CD4-positive, alpha-beta memory T cell (primary cell): ENCODE measurements at regions of chr11 and their contacts with region 1.

Region 1: GRCh38 chr11:46352063-46352841 is 5.0 kb downstream of the DGKZ start:
- DNase-seq: peak; percentile 76 to 90 (median 80)
- H3K4me3 ChIP-seq: peak overlapping the region; percentile 60 to 61
- H3K4me3 Mint-ChIP-seq: peak overlapping the region; percentile 73 to 91 (median 83)
- H3K27ac ChIP-seq: peak overlapping the region; percentile 69
- H3K27ac Mint-ChIP-seq: peak overlapping the region; percentile 84 to 97 (median 90)
- H3K4me1 ChIP-seq: peaks cover 87% of the 10 kb centered on the region
- H3K4me1 Mint-ChIP-seq: peaks cover 44 to 91% (median 70%) of the 10 kb centered on the region in 4 donors
- H3K27me3 ChIP-seq: no peaks in the 10 kb centered on the region
- H3K27me3 Mint-ChIP-seq: no peaks in the 10 kb centered on the region

Region 2: DNA sequence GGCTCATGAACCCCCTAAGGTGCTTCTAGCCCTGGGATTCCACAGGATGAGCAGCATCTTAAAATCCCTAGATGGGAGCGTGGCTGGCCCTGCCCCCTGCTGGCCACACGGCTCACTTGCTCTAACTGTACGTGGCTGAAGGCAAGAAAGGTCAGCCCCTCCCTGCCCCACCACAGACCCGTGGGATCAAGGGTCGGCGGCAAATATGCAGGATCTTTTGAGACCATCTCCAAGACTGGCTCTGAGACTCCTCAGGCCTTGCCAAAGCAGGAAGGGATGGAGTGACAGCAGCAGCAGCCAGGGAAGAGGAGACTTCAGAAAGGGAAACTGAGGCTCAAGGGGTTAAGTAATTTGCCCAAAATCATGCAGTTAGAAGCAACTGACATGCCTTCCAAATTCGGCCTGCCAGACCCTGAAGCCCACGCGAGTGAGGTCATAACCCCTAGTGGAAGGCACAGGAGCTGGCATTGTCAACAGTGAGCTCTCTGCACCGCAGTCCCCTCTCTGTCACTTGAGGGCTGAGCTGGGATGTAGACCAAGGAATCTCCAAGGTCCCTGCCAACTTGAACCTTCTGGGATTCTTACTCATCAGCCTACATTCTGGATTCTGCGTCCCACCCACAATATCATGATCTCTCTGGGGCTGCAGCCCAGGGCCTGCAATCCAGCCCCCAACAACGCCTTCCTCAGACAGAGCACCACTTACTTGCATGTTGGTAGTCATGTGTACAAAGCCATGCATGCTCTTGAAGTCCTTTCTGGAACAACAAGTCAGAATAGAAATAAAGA is 43.4 kb before region 1 on chr11:
- CTCF ChIA-PET with region 1: interaction called, 11 read pairs
- POLR2A ChIA-PET with region 1: no interaction called
- intact Hi-C with region 1: no loop called
- DNase-seq: peak; percentile 44 to 61 (median 53)
- H3K4me3 ChIP-seq: no peak overlapping the region
- H3K4me3 Mint-ChIP-seq: no peak overlapping the region
- H3K27ac ChIP-seq: no peak overlapping the region
- H3K27ac Mint-ChIP-seq: peak overlapping the region in 1 of 7 donors; percentile 69
- H3K4me1 ChIP-seq: peaks cover 6% of the 10 kb centered on the region
- H3K4me1 Mint-ChIP-seq: peaks cover 4 to 11% (median 6%) of the 10 kb centered on the region in 4 donors
- H3K27me3 ChIP-seq: no peaks in the 10 kb centered on the region
- H3K27me3 Mint-ChIP-seq: no peaks in the 10 kb centered on the region

Region 3: GRCh38 chr11:46315033-46315738 is 37.1 kb before region 1 on chr11:
- CTCF ChIA-PET with region 1: interaction called, 11 read pairs
- POLR2A ChIA-PET with region 1: interaction called, 4 read pairs
- intact Hi-C with region 1: no loop called
- DNase-seq: peak; percentile 57 to 73 (median 66)
- H3K4me3 ChIP-seq: no peak overlapping the region
- H3K4me3 Mint-ChIP-seq: peak overlapping the region in 1 of 8 donors; percentile 26
- H3K27ac ChIP-seq: no peak overlapping the region
- H3K27ac Mint-ChIP-seq: peak overlapping the region in 1 of 7 donors; percentile 65
- H3K4me1 ChIP-seq: peaks cover 17% of the 10 kb centered on the region
- H3K4me1 Mint-ChIP-seq: peaks cover 11 to 28% (median 20%) of the 10 kb centered on the region in 4 donors
- H3K27me3 ChIP-seq: no peaks in the 10 kb centered on the region
- H3K27me3 Mint-ChIP-seq: no peaks in the 10 kb centered on the region

Region 4: GRCh38 chr11:46332568-46333393 is 19.5 kb before region 1 on chr11:
- CTCF ChIA-PET with region 1: interaction called, 34 read pairs
- POLR2A ChIA-PET with region 1: interaction called, 262 read pairs
- intact Hi-C with region 1: loop called (anchors 1 kb)
- DNase-seq: peak in 4 of 5 donors; percentile 30 to 59 (median 44)
- H3K4me3 ChIP-seq: peak overlapping the region; percentile 15 to 54
- H3K4me3 Mint-ChIP-seq: peak overlapping the region; percentile 87 to 96 (median 90)
- H3K27ac ChIP-seq: peak overlapping the region; percentile 42
- H3K27ac Mint-ChIP-seq: peak overlapping the region in 6 of 7 donors; percentile 84 to 98 (median 96)
- H3K4me1 ChIP-seq: peaks cover 74% of the 10 kb centered on the region
- H3K4me1 Mint-ChIP-seq: peaks cover 33 to 74% (median 61%) of the 10 kb centered on the region in 4 donors
- H3K27me3 ChIP-seq: no peaks in the 10 kb centered on the region
- H3K27me3 Mint-ChIP-seq: no peaks in the 10 kb centered on the region

Region 5: DNA sequence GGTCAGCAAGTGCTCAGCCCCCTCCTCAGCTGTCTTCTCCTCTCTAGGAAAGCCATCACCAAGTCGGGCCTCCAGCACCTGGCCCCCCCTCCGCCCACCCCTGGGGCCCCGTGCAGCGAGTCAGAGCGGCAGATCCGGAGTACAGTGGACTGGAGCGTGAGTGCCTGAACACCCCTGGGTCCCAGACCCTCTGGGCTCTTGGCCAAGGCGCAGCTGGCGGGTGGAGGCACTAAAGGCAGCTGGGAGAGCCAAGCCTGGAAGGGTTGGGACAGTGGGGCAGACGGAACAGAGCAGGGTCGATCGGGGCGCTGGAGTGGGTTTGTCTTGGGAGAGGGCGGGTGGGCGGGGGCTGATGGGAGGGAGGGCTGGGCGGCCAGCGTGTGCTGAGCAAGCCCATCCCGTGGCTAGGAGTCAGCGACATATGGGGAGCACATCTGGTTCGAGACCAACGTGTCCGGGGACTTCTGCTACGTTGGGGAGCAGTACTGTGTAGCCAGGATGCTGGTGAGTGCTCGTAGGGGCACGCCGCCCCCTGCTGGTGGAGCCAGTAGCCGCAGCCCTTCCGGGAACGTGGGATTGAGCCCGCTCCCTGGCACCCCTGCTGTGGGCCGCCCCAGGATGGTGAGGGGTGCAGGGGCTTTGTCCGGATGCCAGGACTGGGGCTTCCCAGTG is 15.1 kb after region 1 on chr11:
- CTCF ChIA-PET with region 1: interaction called, 469 read pairs
- POLR2A ChIA-PET with region 1: interaction called, 334 read pairs
- intact Hi-C with region 1: loop called (anchors 1 kb)
- DNase-seq: peak; percentile 68 to 74 (median 73)
- H3K4me3 ChIP-seq: no peak overlapping the region
- H3K4me3 Mint-ChIP-seq: no peak overlapping the region
- H3K27ac ChIP-seq: peak overlapping the region; percentile 22
- H3K27ac Mint-ChIP-seq: peak overlapping the region in 3 of 7 donors; percentile 24 to 53 (median 42)
- H3K4me1 ChIP-seq: peaks cover 55% of the 10 kb centered on the region
- H3K4me1 Mint-ChIP-seq: peaks cover 21 to 55% (median 40%) of the 10 kb centered on the region in 4 donors
- H3K27me3 ChIP-seq: no peaks in the 10 kb centered on the region
- H3K27me3 Mint-ChIP-seq: no peaks in the 10 kb centered on the region

Region 6: GRCh38 chr11:46380340-46381047 is 28.2 kb after region 1 on chr11:
- CTCF ChIA-PET with region 1: interaction called, 14 read pairs
- POLR2A ChIA-PET with region 1: interaction called, 34 read pairs
- intact Hi-C with region 1: loop called (anchors 5 kb)
- DNase-seq: peak; percentile 41 to 79 (median 47)
- H3K4me3 ChIP-seq: peak overlapping the region; percentile 29 to 60
- H3K4me3 Mint-ChIP-seq: peak overlapping the region; percentile 80 to 90 (median 82)
- H3K27ac ChIP-seq: peak overlapping the region; percentile 49
- H3K27ac Mint-ChIP-seq: peak overlapping the region; percentile 32 to 86 (median 71)
- H3K4me1 ChIP-seq: peaks cover 12% of the 10 kb centered on the region
- H3K4me1 Mint-ChIP-seq: peaks cover 4 to 9% (median 7%) of the 10 kb centered on the region in 4 donors
- H3K27me3 ChIP-seq: peaks cover 12% of the 10 kb centered on the region
- H3K27me3 Mint-ChIP-seq: peaks cover 3 to 15% of the 10 kb centered on the region in 2 donors

Region 7: DNA sequence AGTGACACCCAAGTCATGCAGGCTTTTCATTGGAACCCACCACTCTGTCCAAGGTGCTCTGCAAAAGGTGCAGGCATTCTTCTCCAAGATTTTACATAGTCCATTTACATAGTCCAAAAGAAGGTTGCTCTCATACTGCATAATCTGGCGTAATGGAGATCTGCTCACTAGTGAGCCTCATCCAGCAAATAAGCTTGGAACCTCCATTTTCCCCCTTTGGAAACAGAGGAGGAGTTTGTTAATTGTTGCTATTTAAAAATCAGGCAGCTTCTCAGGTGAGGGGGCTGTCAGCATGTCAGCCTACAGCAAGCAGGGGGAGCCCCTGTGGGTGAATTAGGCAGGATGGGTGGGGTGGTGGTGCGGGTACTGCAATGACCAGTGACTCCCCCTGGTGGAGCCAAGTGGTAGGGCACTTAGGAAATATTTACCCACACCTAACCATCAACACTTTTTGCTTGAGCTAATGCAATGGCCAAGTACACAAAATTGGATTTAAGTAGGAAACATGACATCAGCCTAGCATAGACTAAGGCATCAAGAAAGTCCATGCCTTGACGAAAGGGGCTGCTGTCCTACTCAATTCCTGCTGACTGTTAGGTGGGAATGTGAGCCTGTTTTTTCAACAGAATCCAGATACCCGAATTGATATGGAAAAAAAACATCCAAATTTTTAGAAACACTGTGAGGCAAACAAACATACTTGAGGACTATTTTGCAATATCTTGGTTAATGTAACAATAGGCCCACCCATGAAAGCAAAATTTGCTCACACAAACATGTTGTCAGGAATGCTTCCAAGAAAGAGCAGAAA is 177.0 kb after region 1 on chr11:
- CTCF ChIA-PET with region 1: interaction called, 10 read pairs
- POLR2A ChIA-PET with region 1: no interaction called
- intact Hi-C with region 1: loop called (anchors 2 kb)
- DNase-seq: peak; percentile 64 to 78 (median 67)
- H3K4me3 ChIP-seq: no peak overlapping the region
- H3K4me3 Mint-ChIP-seq: no peak overlapping the region
- H3K27ac ChIP-seq: no peak overlapping the region
- H3K27ac Mint-ChIP-seq: peak overlapping the region in 4 of 7 donors; percentile 10 to 86 (median 53)
- H3K4me1 ChIP-seq: peaks cover 12% of the 10 kb centered on the region
- H3K4me1 Mint-ChIP-seq: peaks cover 28 to 50% (median 38%) of the 10 kb centered on the region in 4 donors
- H3K27me3 ChIP-seq: no peaks in the 10 kb centered on the region
- H3K27me3 Mint-ChIP-seq: no peaks in the 10 kb centered on the region